ENCODE measurements at regions of chr12 and their contacts with region 1.

Region 1: GRCh38 chr12:123843912-123844748 is 82.0 kb downstream of the DNAH10 start:
- DNase-seq: no peak
- ATAC-seq: no peak
- H3K4me3 Mint-ChIP-seq: no peak overlapping the region
- H3K27ac Mint-ChIP-seq: no peak overlapping the region
- H3K4me1 Mint-ChIP-seq: peaks cover 3% of the 10 kb centered on the region; the same call in 1 of the 2 replicates
- H3K27me3 Mint-ChIP-seq: peaks cover 2% of the 10 kb centered on the region; the same call in 1 of the 2 replicates
- CTCF ChIP-seq: no peak

Region 2: DNA sequence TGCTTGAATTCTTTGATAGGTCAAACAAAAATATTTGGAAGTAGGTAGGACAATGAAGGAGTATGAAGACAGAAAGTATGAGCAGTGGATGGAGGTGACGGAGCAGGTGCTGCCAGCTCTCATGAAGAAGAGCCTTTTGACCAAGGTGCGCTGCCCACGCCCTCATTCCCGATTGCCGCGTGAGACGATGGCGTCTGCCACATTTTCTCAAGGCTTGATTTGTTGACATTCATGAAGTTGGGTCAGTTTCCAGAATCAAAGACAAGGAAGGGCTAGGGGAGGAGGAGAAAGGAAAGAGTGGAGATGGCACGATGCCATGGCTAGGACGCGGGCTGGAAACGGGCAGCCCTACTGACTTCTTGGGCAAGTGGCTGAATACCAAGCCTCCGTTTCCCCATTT is 44.9 kb before region 1 on chr12:
- CTCF ChIA-PET with region 1: interaction called, 11 read pairs
- POLR2A ChIA-PET with region 1: no interaction called
- DNase-seq: no peak
- ATAC-seq: no peak
- H3K4me3 Mint-ChIP-seq: no peak overlapping the region
- H3K27ac Mint-ChIP-seq: no peak overlapping the region
- H3K4me1 Mint-ChIP-seq: no peaks in the 10 kb centered on the region
- H3K27me3 Mint-ChIP-seq: no peaks in the 10 kb centered on the region; the same call in 1 of the 2 replicates
- CTCF ChIP-seq: no peak

Region 3: DNA sequence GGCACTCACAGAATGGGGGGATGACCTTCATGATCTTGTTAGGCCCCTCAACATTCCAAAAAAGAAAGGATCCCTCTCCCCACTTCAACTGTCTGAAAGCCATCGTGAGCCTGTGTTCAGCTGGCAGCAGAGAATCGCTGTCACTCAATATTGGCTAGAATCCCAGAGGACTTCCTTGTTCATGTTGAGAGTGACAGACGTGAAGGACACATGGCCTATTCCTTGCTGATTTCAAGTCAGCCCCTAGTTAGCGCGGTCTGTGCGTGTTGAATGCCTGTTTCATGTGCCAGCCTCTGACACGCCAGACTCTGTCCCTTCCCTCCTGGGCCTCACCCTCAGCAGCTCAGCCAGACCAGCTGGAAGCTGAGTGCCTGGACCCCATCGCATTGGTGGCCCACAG is 39.0 kb before region 1 on chr12:
- CTCF ChIA-PET with region 1: interaction called, 11 read pairs
- POLR2A ChIA-PET with region 1: no interaction called
- DNase-seq: no peak
- ATAC-seq: no peak
- H3K4me3 Mint-ChIP-seq: no peak overlapping the region
- H3K27ac Mint-ChIP-seq: no peak overlapping the region
- H3K4me1 Mint-ChIP-seq: peaks cover 3% of the 10 kb centered on the region; the same call in 1 of the 2 replicates
- H3K27me3 Mint-ChIP-seq: peaks cover 15% of the 10 kb centered on the region
- CTCF ChIP-seq: no peak

Region 4: GRCh38 chr12:123828120-123828519 is 16.0 kb before region 1 on chr12:
- CTCF ChIA-PET with region 1: interaction called, 10 read pairs
- POLR2A ChIA-PET with region 1: no interaction called
- DNase-seq: no peak
- ATAC-seq: no peak
- H3K4me3 Mint-ChIP-seq: no peak overlapping the region
- H3K27ac Mint-ChIP-seq: no peak overlapping the region
- H3K4me1 Mint-ChIP-seq: no peaks in the 10 kb centered on the region
- H3K27me3 Mint-ChIP-seq: peaks cover 29% of the 10 kb centered on the region
- CTCF ChIP-seq: no peak

Region 5: DNA sequence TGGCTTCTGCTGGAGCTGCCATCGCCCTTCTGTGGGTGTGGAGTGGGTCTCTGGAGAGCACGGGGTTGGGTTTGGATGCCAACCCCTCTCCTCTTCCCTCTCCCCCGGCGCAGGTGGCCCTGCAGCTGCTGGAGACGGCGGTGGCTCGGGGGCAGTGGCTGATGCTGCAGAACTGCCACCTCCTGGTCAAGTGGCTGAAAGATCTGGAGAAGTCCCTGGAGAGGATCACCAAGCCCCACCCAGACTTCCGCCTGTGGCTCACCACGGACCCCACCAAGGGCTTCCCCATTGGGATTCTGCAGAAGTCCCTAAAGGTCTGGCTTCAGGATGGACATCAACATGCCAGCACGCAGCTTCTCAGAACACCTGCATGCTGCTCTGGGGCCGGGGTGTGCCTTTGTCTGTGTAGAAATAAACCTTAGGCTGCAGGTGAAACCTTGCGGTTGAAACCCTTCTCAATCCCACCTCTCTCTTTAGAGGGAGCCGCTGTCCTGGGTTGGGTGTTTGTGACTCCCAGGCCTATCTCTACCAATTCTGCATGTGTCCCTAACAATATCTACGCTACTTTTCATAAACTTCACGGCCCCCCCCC is 84.2 kb after region 1 on chr12:
- CTCF ChIA-PET with region 1: interaction called, 12 read pairs
- POLR2A ChIA-PET with region 1: no interaction called
- DNase-seq: no peak
- ATAC-seq: no peak; the same call in 1 of the 2 replicates
- H3K4me3 Mint-ChIP-seq: no peak overlapping the region
- H3K27ac Mint-ChIP-seq: no peak overlapping the region
- H3K4me1 Mint-ChIP-seq: no peaks in the 10 kb centered on the region
- H3K27me3 Mint-ChIP-seq: peaks cover 7% of the 10 kb centered on the region; the same call in 1 of the 2 replicates
- CTCF ChIP-seq: no peak